AG04449 (cell line): ENCODE measurements at regions of chr7 and their contacts with region 1.

Region 1: DNA sequence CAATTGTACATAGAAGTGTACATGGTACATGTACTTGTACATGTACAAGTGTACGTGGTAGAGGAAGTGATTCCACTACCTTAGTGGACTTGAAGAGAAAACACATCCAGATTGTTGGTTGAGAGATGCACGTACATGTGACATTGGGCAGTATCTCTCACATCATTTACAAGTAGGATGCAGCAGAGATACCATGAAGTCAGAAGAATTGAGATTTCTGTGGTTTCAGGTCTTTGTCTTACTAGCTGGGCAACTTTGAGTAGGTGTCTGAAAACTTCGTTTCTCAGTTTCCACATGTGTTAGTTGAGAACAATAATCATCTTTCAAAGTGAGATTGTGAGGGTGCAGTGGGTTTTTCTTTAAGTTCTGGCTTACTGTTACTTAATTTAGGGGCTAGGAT is 21.5 kb downstream of the CLDN12 start:
- DNase-seq: no peak
- H3K4me3 ChIP-seq: no peak overlapping the region
- CTCF ChIP-seq: no peak

Region 2: GRCh38 chr7:90262438-90262837 is 162.3 kb before region 1 on chr7:
- CTCF ChIA-PET with region 1: interaction called, 15 read pairs
- POLR2A ChIA-PET with region 1: no interaction called
- DNase-seq: no peak
- H3K4me3 ChIP-seq: no peak overlapping the region
- CTCF ChIP-seq: no peak

Region 3: DNA sequence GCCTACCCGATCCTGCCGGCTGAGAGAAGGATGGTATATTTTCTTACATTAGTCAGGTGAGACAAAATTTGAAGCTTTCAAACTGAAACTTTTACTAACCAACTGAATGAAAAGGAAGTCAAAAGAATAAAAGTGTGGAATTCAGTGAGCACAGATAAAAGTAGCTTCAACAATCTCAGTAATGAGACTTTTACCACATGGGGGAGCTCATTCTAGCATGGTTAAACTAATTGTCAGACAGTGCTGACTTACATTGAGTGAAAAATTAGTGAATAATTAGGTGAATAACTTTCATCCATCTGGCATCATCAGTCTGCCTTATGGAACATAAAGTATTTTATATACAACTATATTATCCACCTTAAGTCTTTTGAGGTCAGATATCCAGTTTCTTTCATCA is 112.0 kb before region 1 on chr7:
- CTCF ChIA-PET with region 1: interaction called, 42 read pairs
- POLR2A ChIA-PET with region 1: no interaction called
- DNase-seq: no peak
- H3K4me3 ChIP-seq: no peak overlapping the region
- CTCF ChIP-seq: peak; percentile 16

Region 4: DNA sequence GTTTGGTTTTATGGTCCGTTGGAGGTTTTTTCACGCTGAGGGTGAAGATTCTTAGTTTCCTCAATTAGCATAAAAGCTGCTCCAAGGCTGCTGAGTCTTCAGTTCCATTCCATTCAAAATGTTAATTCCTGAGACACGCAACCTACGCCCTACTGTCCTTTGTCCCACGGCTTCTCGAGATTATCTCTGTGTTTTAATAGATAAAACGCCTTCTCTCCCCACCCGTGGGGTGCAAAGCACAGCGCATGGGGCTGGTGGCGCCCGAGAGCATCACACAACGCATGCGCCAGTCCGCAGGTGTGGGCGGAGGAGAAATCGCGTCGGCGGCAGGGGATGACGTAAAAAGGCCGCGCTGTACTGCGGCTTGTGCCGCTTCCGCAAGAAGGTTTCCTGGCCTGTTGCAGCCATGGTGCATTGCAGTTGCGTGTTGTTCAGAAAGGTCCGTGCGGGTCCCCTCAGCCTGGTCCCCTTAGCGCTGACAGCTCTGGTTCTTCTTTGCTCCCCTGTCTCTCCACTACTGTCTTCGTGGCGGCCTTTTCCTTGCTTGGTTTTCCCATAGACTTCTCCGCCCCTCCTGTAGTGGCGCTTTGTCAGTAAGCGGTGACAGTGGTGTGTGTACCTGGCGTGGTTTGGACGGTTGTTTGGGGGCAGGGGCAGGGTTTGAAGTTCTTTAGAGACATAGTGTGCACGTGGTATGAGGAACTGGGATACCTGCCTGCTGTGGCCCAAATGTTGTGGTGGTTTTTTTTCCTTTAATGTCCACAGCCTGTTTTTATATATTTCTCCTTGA is 78.2 kb before region 1 on chr7 and contains the start of gene GTPBP10:
- CTCF ChIA-PET with region 1: interaction called, 12 read pairs
- POLR2A ChIA-PET with region 1: no interaction called
- DNase-seq: peak; percentile 69
- H3K4me3 ChIP-seq: peak within 1 kb of the TSS; percentile 96
- CTCF ChIP-seq: peak; percentile 90

Region 5: DNA sequence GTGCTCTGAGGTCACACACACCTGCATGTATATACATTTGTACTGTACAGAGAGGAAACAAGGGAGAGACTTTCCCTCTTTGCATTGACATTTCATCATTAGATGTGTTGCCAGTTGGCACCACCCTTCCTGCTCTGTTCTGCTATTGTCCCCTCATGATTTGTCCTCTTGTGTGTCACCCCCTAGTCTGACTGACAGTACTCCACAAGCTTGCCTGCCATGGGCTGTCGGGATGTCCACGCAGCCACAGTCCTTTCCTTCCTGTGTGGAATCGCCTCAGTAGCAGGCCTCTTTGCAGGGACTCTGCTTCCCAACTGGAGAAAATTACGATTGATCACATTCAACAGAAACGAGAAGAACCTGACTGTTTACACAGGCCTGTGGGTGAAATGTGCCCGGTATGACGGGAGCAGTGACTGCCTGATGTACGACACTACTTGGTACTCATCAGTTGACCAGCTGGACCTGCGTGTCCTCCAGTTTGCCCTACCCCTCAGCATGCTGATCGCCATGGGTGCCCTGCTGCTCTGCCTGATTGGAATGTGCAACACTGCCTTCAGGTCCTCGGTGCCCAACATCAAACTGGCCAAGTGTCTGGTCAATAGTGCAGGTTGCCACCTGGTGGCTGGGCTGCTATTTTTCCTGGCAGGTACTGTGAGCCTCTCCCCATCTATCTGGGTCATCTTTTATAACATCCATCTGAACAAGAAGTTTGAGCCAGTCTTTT is 12.1 kb before region 1 on chr7:
- CTCF ChIA-PET with region 1: interaction called, 77 read pairs
- POLR2A ChIA-PET with region 1: no interaction called
- DNase-seq: no peak
- H3K4me3 ChIP-seq: no peak overlapping the region
- CTCF ChIP-seq: peak; percentile 13

Region 6: DNA sequence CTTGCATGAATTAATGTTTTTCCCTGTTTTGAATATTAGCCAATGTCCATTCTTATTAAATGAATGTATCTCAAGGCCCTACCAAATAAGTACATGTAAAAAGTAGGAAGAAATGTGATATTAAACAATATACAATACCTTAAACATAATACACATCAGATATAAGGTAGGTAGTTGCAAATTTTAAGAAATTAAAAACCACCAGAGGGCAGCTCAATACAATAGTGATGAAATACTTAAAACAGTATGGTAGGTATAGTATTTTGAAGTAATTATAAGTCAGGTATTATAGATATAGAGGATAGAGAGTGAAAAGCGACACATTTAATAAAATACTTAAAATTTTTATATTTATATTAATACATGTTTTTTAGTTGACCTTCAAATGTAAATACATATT is 127.8 kb after region 1 on chr7:
- CTCF ChIA-PET with region 1: no interaction called
- POLR2A ChIA-PET with region 1: no interaction called
- DNase-seq: no peak
- H3K4me3 ChIP-seq: no peak overlapping the region
- CTCF ChIP-seq: no peak